ENCODE measurements at regions of chr10 and their contacts with region 1.

Region 1: DNA sequence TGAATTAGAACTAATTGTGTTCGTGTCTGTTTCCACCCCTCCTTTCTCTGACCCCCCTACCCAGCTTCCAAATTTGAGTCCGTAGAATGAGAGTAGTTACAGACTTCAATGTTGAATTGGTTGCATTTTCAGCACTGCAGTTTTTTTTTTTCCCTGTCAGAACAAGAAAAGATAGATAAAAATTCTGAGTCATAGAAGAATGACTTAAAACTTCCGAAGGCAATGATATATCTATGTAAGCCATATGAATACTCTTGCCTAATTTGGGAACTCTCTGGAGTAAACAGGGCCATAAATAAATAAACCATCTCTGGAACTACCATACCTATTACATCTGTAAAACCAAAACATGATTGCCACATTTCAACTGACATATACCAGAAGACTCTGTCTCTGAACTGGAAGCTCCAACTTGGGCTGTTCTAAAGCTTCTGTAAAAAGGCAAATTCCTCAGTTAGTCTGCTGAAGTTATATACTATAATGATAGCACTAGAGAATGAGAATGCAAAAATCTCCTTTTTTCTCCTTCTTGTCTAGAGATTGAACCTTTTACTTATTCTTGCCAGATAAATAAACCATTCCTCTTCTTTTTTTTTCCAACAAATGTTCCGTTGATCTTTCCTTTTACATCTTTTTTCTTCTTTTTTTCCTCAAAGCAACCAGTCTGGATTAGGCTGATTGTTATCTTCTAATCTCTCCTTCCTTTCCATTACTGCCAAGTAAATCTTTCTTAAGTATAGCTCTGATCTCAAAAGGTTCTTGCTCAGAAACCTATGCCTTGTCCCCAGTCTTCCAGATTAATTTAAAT is 23.5 kb downstream of the VCL start:
- DNase-seq: peak in 3 of 4 experiments; percentile 45 to 80 (median 77)
- ATAC-seq: peak; percentile 81
- H3K4me3 ChIP-seq: peak overlapping the region; percentile 11; the same call in 1 of the 2 replicates
- H3K27ac ChIP-seq: peak overlapping the region; percentile 95
- H3K4me1 ChIP-seq: peaks cover 22 to 70% of the 10 kb centered on the region in 2 experiments
- H3K27me3 ChIP-seq: no peaks in the 10 kb centered on the region
- CTCF ChIP-seq: no peak
- EP300 ChIP-seq: peak; percentile 98
- POLR2A ChIP-seq: no peak
- RAD21 ChIP-seq: no peak; a peak in 2 of 4 replicates

Region 2: DNA sequence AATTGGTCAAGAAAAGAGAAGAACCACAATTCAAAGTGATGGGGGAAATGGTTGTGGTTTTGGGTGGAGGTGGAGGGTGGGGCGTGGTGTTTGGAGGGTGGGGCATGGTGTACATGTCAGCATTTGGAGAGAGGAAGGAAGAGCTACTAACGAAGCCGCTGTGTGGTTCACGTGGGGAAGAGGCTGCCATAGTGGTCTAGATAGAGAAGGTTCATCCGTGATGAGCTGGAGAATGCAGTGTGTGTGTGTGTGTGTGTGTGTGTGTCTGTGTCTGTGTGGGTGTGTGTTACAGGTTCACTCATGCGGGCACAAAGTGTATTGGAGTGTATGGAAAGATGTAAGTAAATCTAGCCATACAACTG is 29.6 kb before region 1 on chr10:
- CTCF ChIA-PET with region 1: no interaction called
- POLR2A ChIA-PET with region 1: interaction called, 109 read pairs
- in situ Hi-C with region 1: no loop called
- intact Hi-C with region 1: no loop called
- DNase-seq: peak; percentile 83 to 92 (median 88)
- ATAC-seq: peak; percentile 95
- H3K4me3 ChIP-seq: no peak overlapping the region
- H3K27ac ChIP-seq: peak overlapping the region; percentile 89
- H3K4me1 ChIP-seq: peaks cover 47 to 55% of the 10 kb centered on the region in 2 experiments
- H3K27me3 ChIP-seq: no peaks in the 10 kb centered on the region
- CTCF ChIP-seq: 0 out of 6 replicates have a peak, but pooled peaks of 1 of the 3 experiments have one; percentile 7
- EP300 ChIP-seq: peak; percentile 29; the same call in 1 of the 2 replicates
- POLR2A ChIP-seq: peak; percentile 88
- RAD21 ChIP-seq: 0 out of 4 replicates have a peak, but pooled peaks of 1 of the 2 experiments have one; percentile 23

Region 3: GRCh38 chr10:74008212-74008731 is 13.2 kb before region 1 on chr10:
- CTCF ChIA-PET with region 1: no interaction called
- POLR2A ChIA-PET with region 1: interaction called, 109 read pairs
- in situ Hi-C with region 1: no loop called
- intact Hi-C with region 1: no loop called
- DNase-seq: no peak
- ATAC-seq: peak; percentile 5
- H3K4me3 ChIP-seq: no peak overlapping the region
- H3K27ac ChIP-seq: peak overlapping the region; percentile 65
- H3K4me1 ChIP-seq: peaks cover 37 to 51% of the 10 kb centered on the region in 2 experiments
- H3K27me3 ChIP-seq: no peaks in the 10 kb centered on the region
- CTCF ChIP-seq: no peak
- EP300 ChIP-seq: 0 out of 2 replicates have a peak, but pooled peaks have one; percentile 12
- POLR2A ChIP-seq: no peak
- RAD21 ChIP-seq: no peak

Region 4: DNA sequence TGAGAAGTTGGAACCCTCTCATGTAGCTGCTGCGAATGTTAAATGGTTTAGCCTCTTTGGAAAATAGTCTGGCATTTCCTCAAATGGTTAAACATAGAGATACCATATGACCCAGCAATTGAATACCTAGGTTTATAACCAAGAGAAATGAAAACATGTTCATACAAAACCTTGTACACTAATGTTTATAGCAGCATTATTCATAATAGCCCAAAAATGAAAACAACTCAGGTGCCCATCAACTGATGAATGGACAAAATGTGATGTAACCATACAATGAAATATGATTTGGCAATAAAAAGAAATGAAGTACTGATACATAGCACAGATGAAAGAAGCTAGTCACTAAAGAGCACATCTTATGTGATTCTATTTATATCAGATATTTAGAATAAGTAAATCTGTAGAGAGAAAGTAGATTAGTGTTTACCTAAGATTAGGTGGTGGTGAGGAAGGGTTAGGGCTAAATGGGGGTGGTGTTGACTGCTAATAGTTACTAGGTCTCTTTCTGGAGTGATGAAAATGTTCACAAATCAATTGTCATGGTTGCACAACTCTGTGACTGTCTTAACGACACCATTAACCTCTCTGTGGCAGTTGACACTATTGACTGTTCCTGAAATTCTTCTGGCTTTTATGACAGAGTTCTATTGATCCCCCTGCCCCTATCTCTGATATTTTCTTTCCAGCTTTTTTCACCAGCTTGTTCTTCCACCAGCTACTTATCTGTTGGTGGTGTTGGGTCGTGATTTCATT is 11.6 kb after region 1 on chr10:
- CTCF ChIA-PET with region 1: no interaction called
- POLR2A ChIA-PET with region 1: interaction called, 20 read pairs
- in situ Hi-C with region 1: no loop called
- intact Hi-C with region 1: no loop called
- DNase-seq: no peak
- ATAC-seq: peak; percentile 7; the same call in 2 of the 3 replicates
- H3K4me3 ChIP-seq: no peak overlapping the region
- H3K27ac ChIP-seq: 0 out of 3 replicates have a peak overlapping the region, but pooled peaks have one; percentile 7
- H3K4me1 ChIP-seq: peaks cover 8 to 40% of the 10 kb centered on the region in 2 experiments; a peak in 4 of 5 replicates
- H3K27me3 ChIP-seq: no peaks in the 10 kb centered on the region
- CTCF ChIP-seq: no peak
- EP300 ChIP-seq: no peak
- POLR2A ChIP-seq: peak; percentile 18; the same call in 1 of the 2 replicates
- RAD21 ChIP-seq: no peak